Vagina (tissue), 2 donors: ENCODE measurements at regions of chr9 and their contacts with region 1.

Region 1: DNA sequence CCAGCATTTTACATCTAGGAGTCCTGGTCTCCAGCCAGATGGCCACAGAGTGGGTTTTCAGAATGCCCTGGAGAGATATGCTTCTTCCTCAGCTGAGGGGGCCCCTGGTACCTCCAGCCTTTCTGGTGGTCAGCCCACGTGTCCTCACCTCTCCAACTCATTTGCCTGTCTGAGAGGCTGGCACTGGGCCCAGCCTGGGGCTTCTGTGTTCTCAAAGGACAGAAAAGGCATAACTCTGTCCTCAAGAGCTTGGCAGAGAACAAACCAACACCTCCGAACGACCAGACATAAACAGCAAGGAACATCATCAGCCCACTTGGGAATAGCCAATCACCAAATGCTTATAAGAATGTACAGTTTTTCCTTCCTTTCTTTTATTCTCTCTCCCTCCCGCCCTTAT is 17.1 kb downstream of the ENG start:
- DNase-seq: no peak
- H3K4me3 ChIP-seq: no peak overlapping the region
- H3K27ac ChIP-seq: peak overlapping the region; percentile 94
- H3K4me1 ChIP-seq: peaks cover 69% of the 10 kb centered on the region
- H3K27me3 ChIP-seq: no peaks in the 10 kb centered on the region
- CTCF ChIP-seq: no peak
- POLR2A ChIP-seq: no peak

Region 2: DNA sequence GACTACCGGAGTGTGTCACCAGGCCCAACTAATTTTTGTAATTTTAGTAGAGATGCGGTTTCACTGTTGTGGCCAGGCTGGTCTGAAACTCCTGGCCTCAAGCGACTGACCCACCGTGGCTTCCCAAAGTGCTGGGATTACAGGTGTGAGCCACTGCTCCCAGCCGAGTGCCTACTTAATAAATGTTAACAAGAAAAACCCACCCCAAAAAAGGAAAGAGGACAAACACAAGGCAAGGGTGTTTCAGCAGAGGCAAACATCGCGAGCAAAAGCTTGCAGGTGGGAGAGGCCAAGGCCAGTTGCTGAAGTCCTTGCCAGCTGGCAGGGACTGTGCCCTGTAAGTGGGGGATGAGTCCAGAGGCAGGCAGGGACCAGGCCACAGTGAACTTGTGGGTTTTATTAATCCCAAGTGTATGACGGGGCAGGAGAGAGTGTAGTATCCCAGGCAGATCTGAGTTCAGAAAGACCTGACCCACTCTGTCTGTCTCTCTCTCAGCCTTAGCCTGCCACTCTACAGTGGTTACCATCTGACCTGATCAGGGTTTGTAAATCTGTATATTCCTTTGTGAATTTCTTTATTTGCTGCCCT is 41.0 kb before region 1 on chr9:
- intact Hi-C with region 1: loop called (anchors 1 kb)
- DNase-seq: peak in 1 of 2 donors; percentile 90
- H3K4me3 ChIP-seq: no peak overlapping the region
- H3K27ac ChIP-seq: peak overlapping the region; percentile 53
- H3K4me1 ChIP-seq: peaks cover 40% of the 10 kb centered on the region
- H3K27me3 ChIP-seq: no peaks in the 10 kb centered on the region
- CTCF ChIP-seq: no peak
- POLR2A ChIP-seq: no peak

Region 3: DNA sequence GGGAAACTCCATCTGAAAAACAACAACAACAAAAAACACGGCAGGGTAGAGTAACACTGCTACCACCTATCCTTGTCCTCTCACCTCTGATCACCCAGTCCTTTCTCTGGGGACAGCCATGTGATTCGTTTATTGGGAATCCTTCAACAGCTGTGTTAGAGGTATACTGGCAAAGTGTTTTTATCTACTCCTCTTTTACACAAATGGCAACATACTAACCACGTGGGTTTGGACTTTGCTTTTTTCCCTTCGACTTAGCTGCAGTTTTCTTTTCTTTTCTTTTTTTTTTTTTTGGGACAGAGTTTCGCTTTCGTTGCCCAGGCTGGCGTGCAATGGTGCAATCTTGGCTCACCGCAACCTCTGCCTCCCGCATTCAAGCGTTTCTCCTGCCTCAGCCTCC is 840.4 kb after region 1 on chr9:
- intact Hi-C with region 1: no loop called
- DNase-seq: no peak
- H3K4me3 ChIP-seq: no peak overlapping the region
- H3K27ac ChIP-seq: no peak overlapping the region
- H3K4me1 ChIP-seq: peaks cover 2% of the 10 kb centered on the region
- H3K27me3 ChIP-seq: no peaks in the 10 kb centered on the region
- CTCF ChIP-seq: no peak
- POLR2A ChIP-seq: no peak